Activated CD4-positive, alpha-beta T cell treated with anti-CD3 and anti-CD28 coated beads, Interleukin-2, amount 10 ng/mL, durations not matched to agents 24 days and 14 days (primary cell): ENCODE measurements at regions of chr15 and their contacts with region 1.

Region 1: DNA sequence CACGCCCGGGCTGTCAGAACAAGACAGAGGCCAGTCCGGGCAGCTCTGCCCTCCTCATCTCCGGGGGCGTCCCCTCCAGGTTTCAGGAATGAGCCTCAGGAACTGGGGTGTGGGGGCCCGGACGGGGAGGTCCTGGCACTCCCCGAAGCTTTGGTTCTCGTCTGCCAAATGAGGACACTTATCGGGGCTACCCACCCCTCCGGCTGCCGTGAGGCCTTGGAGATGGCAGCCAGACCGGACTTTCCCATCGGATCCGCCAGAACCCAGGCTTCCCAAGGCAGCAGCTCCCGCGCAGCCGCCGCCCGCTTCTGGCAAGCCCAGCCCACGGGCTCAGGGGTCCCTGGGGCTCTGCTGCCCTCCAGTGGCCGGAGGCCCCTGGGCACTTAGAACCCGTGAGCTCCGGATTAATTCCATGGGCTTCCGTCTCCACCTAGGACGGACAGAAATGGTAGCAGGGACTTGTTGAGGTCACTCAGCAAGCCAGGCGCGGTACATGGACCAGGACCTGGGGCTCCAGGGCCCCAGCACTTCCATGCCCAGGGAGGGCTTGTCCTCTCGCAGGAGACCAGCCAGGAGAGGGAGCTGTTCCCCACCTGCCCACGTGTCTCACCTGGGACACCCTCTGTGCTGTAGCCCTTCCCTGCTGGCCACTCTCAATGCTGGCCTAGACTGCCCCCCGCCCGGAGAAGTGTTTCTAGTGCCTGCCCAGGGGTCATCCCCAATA is 89.4 kb downstream of the LINGO1 start:
- DNase-seq: peak; percentile 93
- H3K4me3 Mint-ChIP-seq: peak overlapping the region; percentile 79
- H3K27ac Mint-ChIP-seq: peak overlapping the region; percentile 42
- H3K4me1 Mint-ChIP-seq: peaks cover 9% of the 10 kb centered on the region
- H3K27me3 Mint-ChIP-seq: peaks cover 9% of the 10 kb centered on the region

Region 2: GRCh38 chr15:77013776-77014131 is 529.6 kb before region 1 on chr15:
- intact Hi-C with region 1: no loop called
- DNase-seq: peak; percentile 94
- H3K4me3 Mint-ChIP-seq: peak overlapping the region; percentile 88
- H3K27ac Mint-ChIP-seq: peak overlapping the region; percentile 98
- H3K4me1 Mint-ChIP-seq: peaks cover 80% of the 10 kb centered on the region
- H3K27me3 Mint-ChIP-seq: peaks cover 2% of the 10 kb centered on the region

Region 3: GRCh38 chr15:77118882-77119321 is 424.4 kb before region 1 on chr15:
- intact Hi-C with region 1: loop called (anchors 1 kb)
- DNase-seq: peak; percentile 82
- H3K4me3 Mint-ChIP-seq: no peak overlapping the region
- H3K27ac Mint-ChIP-seq: no peak overlapping the region
- H3K4me1 Mint-ChIP-seq: peaks cover 14% of the 10 kb centered on the region
- H3K27me3 Mint-ChIP-seq: peaks cover 2% of the 10 kb centered on the region

Region 4: DNA sequence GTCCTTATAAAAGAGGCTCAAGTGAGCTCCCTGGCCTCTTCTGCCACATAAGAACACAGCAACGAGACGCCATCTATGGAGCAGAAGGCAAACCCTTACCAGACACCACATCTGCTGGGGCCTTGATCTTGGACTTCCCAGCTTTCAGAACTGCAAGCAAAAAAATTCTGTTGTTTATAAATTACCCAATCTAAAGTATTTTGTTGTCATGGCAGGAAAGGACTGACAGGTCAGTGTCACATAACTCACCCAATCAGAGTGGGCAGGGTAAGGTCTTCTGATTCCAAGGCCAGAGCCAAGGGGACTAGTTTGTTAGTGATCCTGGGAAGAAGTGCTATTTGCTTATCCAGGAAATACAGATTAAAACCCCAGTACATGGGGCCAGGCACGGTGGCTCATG is 23.8 kb before region 1 on chr15:
- intact Hi-C with region 1: no loop called
- DNase-seq: no peak
- H3K4me3 Mint-ChIP-seq: no peak overlapping the region
- H3K27ac Mint-ChIP-seq: no peak overlapping the region
- H3K4me1 Mint-ChIP-seq: no peaks in the 10 kb centered on the region
- H3K27me3 Mint-ChIP-seq: peaks cover 6% of the 10 kb centered on the region

Region 5: DNA sequence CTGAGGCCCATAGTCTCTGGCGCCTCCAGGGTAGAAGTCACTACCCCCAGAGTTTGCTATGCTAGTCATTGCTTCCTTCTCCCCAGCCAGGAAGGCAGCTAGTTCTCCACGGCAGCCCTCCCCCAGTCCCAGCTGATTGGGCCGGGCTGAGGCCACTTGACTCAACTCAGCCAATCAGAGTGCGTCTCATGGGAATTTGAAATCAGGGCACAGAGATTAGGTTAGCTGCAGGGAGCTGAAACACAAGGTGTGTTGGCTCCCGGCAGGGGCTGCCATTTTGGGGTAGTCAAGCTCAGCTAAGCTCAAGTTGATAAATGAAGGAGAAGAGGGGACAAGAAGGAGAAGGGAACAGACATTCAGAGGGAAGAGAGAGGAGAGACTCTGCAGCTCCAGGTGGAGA is 56.6 kb after region 1 on chr15:
- intact Hi-C with region 1: no loop called
- DNase-seq: peak; percentile 58
- H3K4me3 Mint-ChIP-seq: no peak overlapping the region
- H3K27ac Mint-ChIP-seq: no peak overlapping the region
- H3K4me1 Mint-ChIP-seq: peaks cover 6% of the 10 kb centered on the region
- H3K27me3 Mint-ChIP-seq: peaks cover 7% of the 10 kb centered on the region

Region 6: DNA sequence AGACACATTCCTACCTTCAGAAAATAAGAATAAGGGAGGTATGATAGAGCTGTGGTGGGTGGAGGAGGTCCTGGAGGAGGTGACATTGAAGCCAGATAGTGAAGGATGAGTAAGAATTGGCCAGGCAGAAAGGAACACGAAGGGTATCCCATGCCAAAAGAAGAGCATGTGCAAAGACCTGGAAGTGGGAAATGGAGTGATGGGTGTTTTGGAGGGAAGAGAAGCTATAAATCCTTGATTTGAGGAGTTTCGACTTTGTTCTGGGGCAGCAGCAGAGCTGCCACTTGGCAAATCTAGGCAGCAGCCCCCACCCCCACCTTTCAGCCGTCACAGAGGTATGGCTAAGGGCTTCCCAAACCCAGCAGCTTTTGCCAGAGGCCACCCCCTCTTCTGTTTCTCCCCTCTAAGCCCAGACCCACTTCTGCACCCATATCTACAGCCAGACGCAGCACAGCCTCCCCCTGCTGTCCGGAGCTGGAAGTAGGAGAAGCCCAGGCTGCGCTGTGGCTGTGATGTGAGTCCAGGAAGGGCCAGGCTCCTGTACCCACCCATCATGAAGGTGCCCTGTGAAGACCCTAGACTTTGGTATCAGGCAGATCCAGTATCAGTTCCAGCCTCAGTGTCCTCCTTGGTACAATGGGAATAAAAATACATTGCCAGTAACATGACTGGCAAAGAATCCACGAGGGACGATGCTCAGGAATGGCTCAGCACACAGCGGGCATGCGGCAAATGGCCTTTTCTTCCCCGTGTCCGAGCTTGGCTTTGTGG is 278.1 kb after region 1 on chr15:
- intact Hi-C with region 1: no loop called
- DNase-seq: peak; percentile 76
- H3K4me3 Mint-ChIP-seq: no peak overlapping the region
- H3K27ac Mint-ChIP-seq: no peak overlapping the region
- H3K4me1 Mint-ChIP-seq: no peaks in the 10 kb centered on the region
- H3K27me3 Mint-ChIP-seq: peaks cover 41% of the 10 kb centered on the region